Esophagus muscularis mucosa (tissue), 4 donors: ENCODE measurements at regions of chr16 and their contacts with region 1.

Region 1: DNA sequence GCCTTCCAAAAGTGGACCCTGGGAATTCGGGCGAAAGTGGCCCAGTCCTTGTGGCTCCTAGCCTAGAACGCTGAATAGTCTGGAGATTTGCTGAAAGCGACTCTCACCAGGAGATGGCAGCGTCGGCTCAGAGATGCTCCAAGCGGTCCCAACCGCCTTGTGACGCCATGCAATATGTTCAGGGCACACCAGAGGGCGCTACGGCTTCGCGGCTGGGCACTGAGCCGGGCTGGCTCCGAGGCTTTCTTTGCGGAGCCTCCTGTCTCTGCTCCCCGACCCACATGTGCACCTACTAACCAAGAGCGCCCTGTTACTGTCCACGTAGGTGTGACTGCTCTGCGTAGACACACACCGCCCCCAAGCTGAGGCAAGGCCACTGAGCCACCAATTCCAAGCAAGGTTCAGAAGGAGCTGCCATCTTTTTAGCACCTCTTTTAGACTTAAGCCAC is 36.9 kb downstream of the SYCE1L start:
- DNase-seq: no peak
- H3K4me3 ChIP-seq: peak overlapping the region in 1 of 4 donors; percentile 41
- H3K27ac ChIP-seq: no peak overlapping the region
- H3K4me1 ChIP-seq: peaks cover 0 to 8% (median 7%) of the 10 kb centered on the region in 4 donors
- H3K27me3 ChIP-seq: peaks cover 0 to 19% (median 0%) of the 10 kb centered on the region in 4 donors
- CTCF ChIP-seq: peak; percentile 97 to 98 (median 97)
- EP300 ChIP-seq: no peak
- POLR2A ChIP-seq: no peak

Region 2: DNA sequence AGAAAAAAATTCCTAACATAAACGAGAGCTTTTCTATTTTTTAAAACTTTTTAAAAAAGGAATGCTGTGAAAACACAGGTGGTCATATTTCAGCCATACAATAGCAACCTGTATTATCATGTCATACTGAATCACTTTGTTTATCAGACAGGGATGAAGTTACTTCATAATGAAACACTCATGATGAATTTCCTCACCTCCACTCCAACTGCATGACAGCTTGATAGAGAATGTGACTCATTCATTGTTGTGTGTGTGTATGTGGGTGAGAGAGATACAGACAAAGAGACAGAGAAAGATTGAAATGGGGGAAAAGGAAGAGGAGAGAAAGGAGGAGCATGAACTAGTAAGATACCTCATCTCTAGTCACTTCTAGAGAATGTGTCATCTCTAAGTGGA is 72.1 kb after region 1 on chr16:
- intact Hi-C with region 1: no loop called
- DNase-seq: no peak
- H3K4me3 ChIP-seq: no peak overlapping the region
- H3K27ac ChIP-seq: no peak overlapping the region
- H3K4me1 ChIP-seq: no peaks in the 10 kb centered on the region
- H3K27me3 ChIP-seq: peaks cover 0 to 4% (median 0%) of the 10 kb centered on the region in 4 donors
- CTCF ChIP-seq: no peak
- EP300 ChIP-seq: no peak
- POLR2A ChIP-seq: no peak

Region 3: GRCh38 chr16:77581706-77582105 is 345.6 kb after region 1 on chr16:
- intact Hi-C with region 1: loop called (anchors 2 kb)
- DNase-seq: no peak
- H3K4me3 ChIP-seq: no peak overlapping the region
- H3K27ac ChIP-seq: no peak overlapping the region
- H3K4me1 ChIP-seq: no peaks in the 10 kb centered on the region
- H3K27me3 ChIP-seq: peaks cover 0 to 4% (median 0%) of the 10 kb centered on the region in 4 donors
- CTCF ChIP-seq: no peak
- EP300 ChIP-seq: no peak
- POLR2A ChIP-seq: no peak

Region 4: GRCh38 chr16:77660311-77660710 is 424.2 kb after region 1 on chr16:
- intact Hi-C with region 1: loop called (anchors 10 kb)
- DNase-seq: no peak
- H3K4me3 ChIP-seq: peak overlapping the region in 1 of 4 donors; percentile 33
- H3K27ac ChIP-seq: no peak overlapping the region
- H3K4me1 ChIP-seq: peaks cover 0 to 6% (median 4%) of the 10 kb centered on the region in 4 donors
- H3K27me3 ChIP-seq: peaks cover 0 to 6% (median 0%) of the 10 kb centered on the region in 4 donors
- CTCF ChIP-seq: peak; percentile 28 to 45 (median 38)
- EP300 ChIP-seq: no peak
- POLR2A ChIP-seq: no peak